AG04450 (cell line): ENCODE measurements at regions of chr17 and their contacts with region 1.

Region 1: GRCh38 chr17:40224718-40225550 is 5.8 kb downstream of the WIPF2 start:
- DNase-seq: no peak
- H3K4me3 ChIP-seq: no peak overlapping the region
- H3K27ac ChIP-seq: no peak overlapping the region
- H3K27me3 ChIP-seq: no peaks in the 10 kb centered on the region
- CTCF ChIP-seq: no peak

Region 2: GRCh38 chr17:40095944-40096791 is 128.8 kb before region 1 on chr17:
- CTCF ChIA-PET with region 1: no interaction called
- POLR2A ChIA-PET with region 1: no interaction called
- DNase-seq: no peak
- H3K4me3 ChIP-seq: no peak overlapping the region
- H3K27ac ChIP-seq: no peak overlapping the region
- H3K27me3 ChIP-seq: no peaks in the 10 kb centered on the region
- CTCF ChIP-seq: no peak

Region 3: GRCh38 chr17:40209404-40210093 is 15.4 kb before region 1 on chr17:
- CTCF ChIA-PET with region 1: no interaction called
- POLR2A ChIA-PET with region 1: no interaction called
- DNase-seq: no peak
- H3K4me3 ChIP-seq: no peak overlapping the region
- H3K27ac ChIP-seq: peak overlapping the region; percentile 33
- H3K27me3 ChIP-seq: no peaks in the 10 kb centered on the region
- CTCF ChIP-seq: no peak

Region 4: GRCh38 chr17:40457964-40458791 is 233.2 kb after region 1 on chr17:
- CTCF ChIA-PET with region 1: no interaction called
- POLR2A ChIA-PET with region 1: interaction called, 12 read pairs
- DNase-seq: peak; percentile 67
- H3K4me3 ChIP-seq: no peak overlapping the region
- H3K27ac ChIP-seq: peak overlapping the region; percentile 71
- H3K27me3 ChIP-seq: no peaks in the 10 kb centered on the region
- CTCF ChIP-seq: no peak